ENCODE measurements at regions of chr10 and their contacts with region 1.

Region 1: DNA sequence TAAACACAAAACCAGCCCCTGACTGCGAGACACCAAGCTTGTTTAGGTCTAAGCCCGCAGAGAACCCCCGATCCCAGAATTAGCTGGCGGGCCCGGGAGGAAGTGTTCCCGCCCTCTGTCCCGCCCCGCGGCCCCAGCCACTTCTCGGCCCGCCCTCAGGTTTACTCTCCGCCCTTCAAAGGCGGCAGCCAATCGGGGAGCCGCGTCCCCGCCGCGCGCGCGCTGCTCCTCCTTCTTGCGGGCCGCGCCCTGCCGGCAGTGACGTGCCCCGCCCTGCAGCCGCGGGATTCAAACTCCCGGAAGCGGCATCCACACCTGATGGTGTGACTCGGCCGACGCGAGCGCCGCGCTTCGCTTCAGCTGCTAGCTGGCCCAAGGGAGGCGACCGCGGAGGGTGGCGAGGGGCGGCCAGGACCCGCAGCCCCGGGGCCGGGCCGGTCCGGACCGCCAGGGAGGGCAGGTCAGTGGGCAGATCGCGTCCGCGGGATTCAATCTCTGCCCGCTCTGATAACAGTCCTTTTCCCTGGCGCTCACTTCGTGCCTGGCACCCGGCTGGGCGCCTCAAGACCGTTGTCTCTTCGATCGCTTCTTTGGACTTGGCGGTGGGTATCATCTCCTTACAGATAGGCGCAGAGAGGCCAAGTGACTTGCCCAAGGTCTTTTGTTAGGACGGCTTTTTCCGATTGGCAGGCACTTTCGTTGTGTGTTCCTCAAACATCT is at the start of gene CEP55:
- DNase-seq: peak; percentile 90 to 96 (median 95)
- ATAC-seq: peak; percentile 99
- H3K4me3 ChIP-seq: peak within 1 kb of the TSS; percentile 87 to 97
- H3K4me3 Mint-ChIP-seq: peak within 1 kb of the TSS; percentile 90
- H3K27ac ChIP-seq: peak within 1 kb of the TSS in 1 of 2 experiments; percentile 54
- H3K27ac Mint-ChIP-seq: no peak within 1 kb of the TSS
- H3K4me1 ChIP-seq: peaks cover 10% of the 10 kb centered on the region
- H3K4me1 Mint-ChIP-seq: peaks cover 14% of the 10 kb centered on the region
- H3K27me3 ChIP-seq: no peaks in the 10 kb centered on the region
- H3K27me3 Mint-ChIP-seq: peaks cover 10% of the 10 kb centered on the region
- CTCF ChIP-seq: no peak
- total RNA-seq, gene CEP55: 0.16 TPM in 1 of 2 experiments, not detected in the other

Region 2: GRCh38 chr10:94545391-94546048 is 1049.0 kb after region 1 on chr10 and contains the start of gene HELLS:
- CTCF ChIA-PET with region 1: no interaction called
- POLR2A ChIA-PET with region 1: no interaction called
- intact Hi-C with region 1: loop called in 1 of 2 experiments (anchors 5 kb)
- DNase-seq: peak; percentile 17 to 83 (median 63)
- ATAC-seq: peak; percentile 76
- H3K4me3 ChIP-seq: peak within 1 kb of the TSS; percentile 90
- H3K4me3 Mint-ChIP-seq: peak within 1 kb of the TSS; percentile 93
- H3K27ac ChIP-seq: peak within 1 kb of the TSS; percentile 70 to 71
- H3K27ac Mint-ChIP-seq: peak within 1 kb of the TSS; percentile 93
- H3K4me1 ChIP-seq: peaks cover 18% of the 10 kb centered on the region
- H3K4me1 Mint-ChIP-seq: peaks cover 23% of the 10 kb centered on the region
- H3K27me3 ChIP-seq: no peaks in the 10 kb centered on the region
- H3K27me3 Mint-ChIP-seq: no peaks in the 10 kb centered on the region
- CTCF ChIP-seq: no peak
- total RNA-seq, gene HELLS: 8.7 to 9.1 TPM

Measured in CD8-positive, alpha-beta T cell (primary cell).